Activated CD8-positive, alpha-beta T cell treated with anti-CD3 and anti-CD28 coated beads, Interleukin-2, amount 10 ng/mL, durations not matched to agents 7 days and 5 days (primary cell): ENCODE measurements at regions of chr13 and their contacts with region 1.

Region 1: DNA sequence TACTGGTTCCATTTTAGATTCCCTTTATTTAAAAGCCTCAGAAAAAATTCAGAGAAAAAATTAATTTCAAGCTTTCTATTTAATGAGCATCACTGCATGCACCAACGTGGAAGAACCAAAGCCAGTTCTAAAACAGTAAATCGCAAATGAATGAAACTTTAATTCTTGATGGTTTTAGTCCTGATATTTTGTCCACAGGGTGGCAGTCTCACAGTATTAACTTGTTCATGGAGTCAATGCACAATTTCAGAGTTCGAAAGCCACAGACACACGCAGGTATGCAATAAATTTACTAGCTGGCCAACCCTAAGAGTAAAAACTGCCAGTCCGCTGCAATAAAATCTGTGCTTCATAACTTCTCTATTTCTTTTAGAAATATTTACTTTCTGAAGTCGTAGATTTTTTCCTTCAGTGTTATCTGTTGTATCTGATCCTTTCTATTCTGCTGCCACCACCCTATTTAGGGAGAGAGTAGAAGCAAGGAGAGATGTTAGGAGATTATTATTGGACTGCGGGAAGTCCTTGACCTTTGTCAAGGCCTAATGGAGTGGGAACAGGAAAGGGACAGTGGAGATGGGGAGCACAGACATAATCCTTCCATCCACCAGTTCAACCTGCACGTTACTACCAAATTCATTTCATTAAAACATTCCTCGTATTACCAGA is 7.0 kb upstream of the WBP4 start:
- DNase-seq: peak; percentile 73
- ATAC-seq: peak; percentile 72
- H3K4me3 Mint-ChIP-seq: peak overlapping the region; percentile 6
- H3K27ac Mint-ChIP-seq: no peak overlapping the region
- H3K4me1 Mint-ChIP-seq: peaks cover 56% of the 10 kb centered on the region
- H3K27me3 Mint-ChIP-seq: no peaks in the 10 kb centered on the region

Region 2: GRCh38 chr13:40922437-40923040 is 131.8 kb before region 1 on chr13:
- CTCF ChIA-PET with region 1: interaction called, 14 read pairs
- POLR2A ChIA-PET with region 1: no interaction called
- DNase-seq: no peak
- ATAC-seq: no peak
- H3K4me3 Mint-ChIP-seq: peak overlapping the region; percentile 53
- H3K27ac Mint-ChIP-seq: no peak overlapping the region
- H3K4me1 Mint-ChIP-seq: peaks cover 19% of the 10 kb centered on the region
- H3K27me3 Mint-ChIP-seq: no peaks in the 10 kb centered on the region

Region 3: GRCh38 chr13:41013835-41014234 is 40.5 kb before region 1 on chr13:
- CTCF ChIA-PET with region 1: interaction called, 48 read pairs
- POLR2A ChIA-PET with region 1: interaction called, 19 read pairs
- DNase-seq: no peak
- ATAC-seq: no peak
- H3K4me3 Mint-ChIP-seq: peak overlapping the region; percentile 89
- H3K27ac Mint-ChIP-seq: peak overlapping the region; percentile 78
- H3K4me1 Mint-ChIP-seq: peaks cover 53% of the 10 kb centered on the region
- H3K27me3 Mint-ChIP-seq: no peaks in the 10 kb centered on the region

Region 4: DNA sequence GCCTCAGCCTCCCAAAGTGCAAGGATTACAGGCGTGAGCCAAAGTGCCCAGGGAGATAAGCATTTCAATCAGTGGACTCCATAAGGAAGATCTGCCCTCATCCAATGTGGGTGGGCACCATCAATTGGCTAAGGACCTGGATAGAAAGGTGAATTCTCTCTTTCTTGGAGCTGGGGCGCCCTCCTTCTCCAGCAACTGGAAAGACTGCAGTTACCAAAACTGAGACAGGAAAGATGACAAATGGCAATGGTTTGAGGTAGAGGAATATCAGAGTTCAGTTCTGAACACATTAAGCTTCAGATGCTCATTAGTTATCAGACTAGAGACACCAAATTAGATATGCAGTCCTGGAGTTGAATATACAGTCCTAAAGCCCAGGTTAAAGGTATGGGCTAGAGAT is 24.7 kb before region 1 on chr13:
- CTCF ChIA-PET with region 1: interaction called, 21 read pairs
- POLR2A ChIA-PET with region 1: no interaction called
- DNase-seq: no peak
- ATAC-seq: no peak
- H3K4me3 Mint-ChIP-seq: no peak overlapping the region
- H3K27ac Mint-ChIP-seq: peak overlapping the region; percentile 8
- H3K4me1 Mint-ChIP-seq: peaks cover 25% of the 10 kb centered on the region
- H3K27me3 Mint-ChIP-seq: no peaks in the 10 kb centered on the region

Region 5: GRCh38 chr13:41075034-41075433 is 20.7 kb after region 1 on chr13:
- CTCF ChIA-PET with region 1: interaction called, 11 read pairs
- POLR2A ChIA-PET with region 1: no interaction called
- DNase-seq: no peak
- ATAC-seq: no peak
- H3K4me3 Mint-ChIP-seq: no peak overlapping the region
- H3K27ac Mint-ChIP-seq: no peak overlapping the region
- H3K4me1 Mint-ChIP-seq: no peaks in the 10 kb centered on the region
- H3K27me3 Mint-ChIP-seq: no peaks in the 10 kb centered on the region

Region 6: GRCh38 chr13:41222259-41222852 is 168.0 kb after region 1 on chr13:
- CTCF ChIA-PET with region 1: interaction called, 21 read pairs
- POLR2A ChIA-PET with region 1: no interaction called
- DNase-seq: peak; percentile 69
- ATAC-seq: peak; percentile 87
- H3K4me3 Mint-ChIP-seq: no peak overlapping the region
- H3K27ac Mint-ChIP-seq: no peak overlapping the region
- H3K4me1 Mint-ChIP-seq: no peaks in the 10 kb centered on the region
- H3K27me3 Mint-ChIP-seq: no peaks in the 10 kb centered on the region

Region 7: DNA sequence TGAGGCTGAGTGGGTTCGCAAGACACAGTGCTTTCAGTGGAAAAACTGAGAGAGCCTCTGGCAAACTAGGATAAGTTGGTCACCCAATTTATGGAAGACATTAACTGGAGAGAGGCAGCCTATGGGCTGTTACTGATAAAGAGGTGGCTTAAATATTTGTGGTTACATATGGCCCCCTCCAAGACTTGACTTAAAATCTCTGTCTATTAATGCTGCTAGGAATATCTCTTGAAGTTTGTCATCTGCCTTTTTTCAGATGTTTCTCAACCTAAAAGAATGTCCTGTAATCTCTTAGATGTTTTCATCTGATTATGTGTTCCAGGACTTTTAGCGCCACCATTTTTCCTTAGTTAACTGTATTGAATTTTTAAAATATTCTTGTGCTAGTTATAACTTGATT is 311.3 kb after region 1 on chr13:
- CTCF ChIA-PET with region 1: no interaction called
- POLR2A ChIA-PET with region 1: no interaction called
- DNase-seq: no peak
- ATAC-seq: no peak
- H3K4me3 Mint-ChIP-seq: no peak overlapping the region
- H3K27ac Mint-ChIP-seq: no peak overlapping the region
- H3K4me1 Mint-ChIP-seq: no peaks in the 10 kb centered on the region
- H3K27me3 Mint-ChIP-seq: no peaks in the 10 kb centered on the region